Activated CD8-positive, alpha-beta T cell treated with anti-CD3 and anti-CD28 coated beads for 36 hours (primary cell): ENCODE measurements at regions of chr6 and their contacts with region 1.

Region 1: GRCh38 chr6:2791124-2791974 is 26.2 kb downstream of the WRNIP1 start:
- DNase-seq: peak; percentile 79
- ATAC-seq: peak; percentile 77
- H3K4me3 Mint-ChIP-seq: no peak overlapping the region
- H3K27ac Mint-ChIP-seq: peak overlapping the region; percentile 80
- H3K4me1 Mint-ChIP-seq: peaks cover 36% of the 10 kb centered on the region
- H3K27me3 Mint-ChIP-seq: no peaks in the 10 kb centered on the region
- CTCF ChIP-seq: peak; percentile 83

Region 2: DNA sequence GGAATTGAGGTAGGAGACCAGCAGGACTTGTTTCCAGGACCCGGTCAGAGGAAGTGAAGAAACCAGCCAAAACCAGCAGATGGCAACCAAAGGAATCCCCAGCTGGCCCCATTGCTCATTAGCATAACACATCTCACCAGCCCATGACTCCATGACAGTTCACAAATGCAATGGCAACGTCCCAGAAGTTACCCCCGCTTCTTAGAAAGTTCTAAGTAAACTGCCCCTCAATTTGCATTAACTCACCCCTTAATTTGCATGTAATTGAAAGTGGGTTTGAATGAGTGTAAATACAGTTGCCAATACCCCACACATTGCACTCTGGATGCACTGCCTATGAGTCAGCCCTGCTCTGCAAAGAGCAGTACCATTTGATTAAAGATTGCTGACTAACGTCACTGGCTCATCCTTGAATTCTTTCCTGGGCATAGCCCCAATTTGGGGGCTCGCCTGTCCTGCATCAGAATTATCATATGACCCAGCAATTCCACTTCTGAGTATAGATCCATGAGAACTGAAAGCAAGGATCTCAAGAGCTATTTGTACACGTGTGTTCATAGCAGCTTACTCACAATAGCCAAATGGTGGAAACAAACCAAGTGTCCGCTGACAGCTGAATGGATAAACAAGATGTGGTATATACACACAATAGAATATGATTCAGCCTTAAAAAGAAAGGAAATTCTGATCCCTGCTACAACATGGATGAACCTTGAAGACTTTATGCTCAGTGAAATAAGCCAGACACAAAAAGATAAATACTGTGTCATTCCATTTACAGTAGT is 77.0 kb before region 1 on chr6:
- CTCF ChIA-PET with region 1: no interaction called
- POLR2A ChIA-PET with region 1: no interaction called
- intact Hi-C with region 1: no loop called
- DNase-seq: no peak
- ATAC-seq: no peak
- H3K4me3 Mint-ChIP-seq: no peak overlapping the region
- H3K27ac Mint-ChIP-seq: no peak overlapping the region
- H3K4me1 Mint-ChIP-seq: no peaks in the 10 kb centered on the region
- H3K27me3 Mint-ChIP-seq: no peaks in the 10 kb centered on the region
- CTCF ChIP-seq: no peak

Region 3: DNA sequence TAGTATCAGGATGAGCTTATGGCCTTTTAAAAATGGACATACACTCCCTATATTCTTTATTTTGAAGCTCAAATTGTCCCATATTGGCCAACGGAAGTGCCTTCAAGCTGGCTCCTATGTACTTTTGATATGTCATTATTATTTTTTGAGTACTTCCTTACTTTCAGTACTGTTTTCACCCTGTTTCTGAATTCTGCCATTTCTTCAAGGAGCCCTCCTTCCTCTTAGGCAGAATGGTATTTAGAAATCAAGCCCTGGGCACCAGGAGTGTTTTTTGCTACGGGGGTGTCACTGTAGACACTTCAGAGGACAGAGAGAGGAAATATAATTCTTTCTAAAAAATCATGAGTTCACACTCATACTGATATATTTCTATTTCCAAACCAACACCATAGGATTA is 35.1 kb before region 1 on chr6:
- CTCF ChIA-PET with region 1: no interaction called
- POLR2A ChIA-PET with region 1: no interaction called
- intact Hi-C with region 1: no loop called
- DNase-seq: no peak
- ATAC-seq: no peak
- H3K4me3 Mint-ChIP-seq: no peak overlapping the region
- H3K27ac Mint-ChIP-seq: no peak overlapping the region
- H3K4me1 Mint-ChIP-seq: peaks cover 10% of the 10 kb centered on the region
- H3K27me3 Mint-ChIP-seq: peaks cover 6% of the 10 kb centered on the region
- CTCF ChIP-seq: no peak

Region 4: GRCh38 chr6:2773450-2773849 is 17.9 kb before region 1 on chr6:
- CTCF ChIA-PET with region 1: interaction called, 17 read pairs
- POLR2A ChIA-PET with region 1: interaction called, 3 read pairs
- intact Hi-C with region 1: no loop called
- DNase-seq: no peak
- ATAC-seq: no peak
- H3K4me3 Mint-ChIP-seq: no peak overlapping the region
- H3K27ac Mint-ChIP-seq: no peak overlapping the region
- H3K4me1 Mint-ChIP-seq: peaks cover 55% of the 10 kb centered on the region
- H3K27me3 Mint-ChIP-seq: no peaks in the 10 kb centered on the region
- CTCF ChIP-seq: no peak

Region 5: DNA sequence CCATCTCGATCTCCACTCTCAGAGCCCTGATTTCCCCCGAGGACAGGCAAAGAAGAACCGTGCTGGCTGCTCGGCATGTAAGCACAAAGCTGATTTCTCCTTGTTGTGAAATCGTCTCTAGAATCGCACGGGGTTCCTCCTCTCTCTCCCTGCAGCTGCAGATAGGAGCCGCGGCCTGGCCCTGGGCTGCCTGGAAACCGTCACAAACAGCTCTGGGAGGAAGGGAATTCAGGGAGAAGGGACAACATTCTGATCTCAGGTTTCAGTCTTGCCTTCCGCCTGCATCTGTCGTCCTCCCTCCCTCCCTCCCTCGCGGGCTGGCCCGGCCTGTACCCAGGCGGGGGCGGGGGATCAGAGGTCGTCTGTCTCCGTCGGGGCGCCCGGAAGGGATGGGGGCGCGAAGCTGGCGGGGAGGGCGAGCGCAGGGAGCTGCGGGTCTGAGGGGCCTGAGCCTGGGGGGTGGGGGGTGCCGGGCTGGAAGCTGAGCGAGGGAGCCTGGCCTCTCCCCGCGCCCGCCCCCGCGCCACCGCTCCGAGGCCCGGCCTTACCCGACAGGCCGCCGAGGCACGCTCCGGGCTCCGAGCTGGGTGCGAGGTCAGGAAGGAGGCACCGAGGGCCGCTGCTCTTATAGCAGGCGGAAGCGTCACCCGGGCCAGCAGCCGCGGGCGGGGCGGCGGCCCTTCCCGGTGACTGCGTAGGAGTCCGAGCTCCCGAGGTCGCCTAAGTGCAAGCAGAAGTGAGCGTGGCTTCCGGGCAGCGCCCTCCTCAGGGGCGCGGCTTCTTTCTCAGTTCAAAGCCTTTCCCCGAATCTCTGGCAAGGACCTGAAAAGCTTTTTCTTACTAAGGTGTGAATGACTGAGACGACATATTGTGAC is 50.2 kb after region 1 on chr6 and contains the start of gene SERPINB1:
- CTCF ChIA-PET with region 1: interaction called, 56 read pairs
- POLR2A ChIA-PET with region 1: interaction called, 10 read pairs
- intact Hi-C with region 1: loop called (anchors 2 kb)
- DNase-seq: peak; percentile 95
- ATAC-seq: peak; percentile 90
- H3K4me3 Mint-ChIP-seq: peak within 1 kb of the TSS; percentile 85
- H3K27ac Mint-ChIP-seq: peak within 1 kb of the TSS; percentile 92
- H3K4me1 Mint-ChIP-seq: peaks cover 65% of the 10 kb centered on the region
- H3K27me3 Mint-ChIP-seq: no peaks in the 10 kb centered on the region
- CTCF ChIP-seq: no peak
- total RNA-seq, gene SERPINB1: 55.8 to 60.0 TPM

Region 6: DNA sequence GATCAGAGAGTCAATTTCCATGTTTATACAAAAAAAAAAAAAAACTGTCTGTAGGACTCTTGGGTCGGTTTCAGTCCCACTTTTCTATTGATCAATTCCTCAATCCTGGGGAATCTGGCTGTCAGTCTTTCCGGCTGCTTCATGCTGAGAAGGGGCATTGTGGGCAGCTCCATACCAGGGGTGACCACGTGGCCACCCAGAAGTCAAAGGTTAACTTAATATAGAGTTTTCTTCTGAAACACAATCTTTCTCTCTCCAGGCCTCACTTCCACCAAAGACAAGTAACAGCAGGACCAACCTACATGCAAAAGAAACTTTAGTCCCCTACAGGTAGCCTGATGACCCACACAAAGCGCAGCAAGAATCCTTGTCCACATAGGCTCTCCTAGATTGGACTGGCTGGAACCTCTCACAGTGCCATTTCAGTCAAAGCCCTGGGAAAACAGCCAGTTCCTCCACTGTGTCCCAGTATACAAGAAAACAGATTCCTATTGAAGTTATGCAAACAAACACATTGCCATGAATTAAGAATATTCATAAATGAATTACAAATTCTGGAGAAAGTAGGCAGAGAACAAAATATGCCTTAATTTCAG is 130.3 kb after region 1 on chr6:
- CTCF ChIA-PET with region 1: interaction called, 11 read pairs
- POLR2A ChIA-PET with region 1: no interaction called
- intact Hi-C with region 1: no loop called
- DNase-seq: no peak
- ATAC-seq: no peak
- H3K4me3 Mint-ChIP-seq: no peak overlapping the region
- H3K27ac Mint-ChIP-seq: no peak overlapping the region
- H3K4me1 Mint-ChIP-seq: peaks cover 19% of the 10 kb centered on the region
- H3K27me3 Mint-ChIP-seq: no peaks in the 10 kb centered on the region
- CTCF ChIP-seq: no peak

Region 7: GRCh38 chr6:2952557-2953095 is 161.3 kb after region 1 on chr6:
- CTCF ChIA-PET with region 1: interaction called, 10 read pairs
- POLR2A ChIA-PET with region 1: no interaction called
- intact Hi-C with region 1: no loop called
- DNase-seq: peak; percentile 77
- ATAC-seq: peak; percentile 97
- H3K4me3 Mint-ChIP-seq: peak overlapping the region; percentile 44
- H3K27ac Mint-ChIP-seq: peak overlapping the region; percentile 68
- H3K4me1 Mint-ChIP-seq: peaks cover 13% of the 10 kb centered on the region
- H3K27me3 Mint-ChIP-seq: no peaks in the 10 kb centered on the region
- CTCF ChIP-seq: peak; percentile 99

Region 8: GRCh38 chr6:3139090-3139903 is 347.9 kb after region 1 on chr6:
- CTCF ChIA-PET with region 1: no interaction called
- POLR2A ChIA-PET with region 1: no interaction called
- intact Hi-C with region 1: no loop called
- DNase-seq: no peak
- ATAC-seq: no peak
- H3K4me3 Mint-ChIP-seq: no peak overlapping the region
- H3K27ac Mint-ChIP-seq: no peak overlapping the region
- H3K4me1 Mint-ChIP-seq: peaks cover 10% of the 10 kb centered on the region
- H3K27me3 Mint-ChIP-seq: no peaks in the 10 kb centered on the region
- CTCF ChIP-seq: no peak